ENCODE measurements at regions of chr2 and their contacts with region 1.

Region 1: DNA sequence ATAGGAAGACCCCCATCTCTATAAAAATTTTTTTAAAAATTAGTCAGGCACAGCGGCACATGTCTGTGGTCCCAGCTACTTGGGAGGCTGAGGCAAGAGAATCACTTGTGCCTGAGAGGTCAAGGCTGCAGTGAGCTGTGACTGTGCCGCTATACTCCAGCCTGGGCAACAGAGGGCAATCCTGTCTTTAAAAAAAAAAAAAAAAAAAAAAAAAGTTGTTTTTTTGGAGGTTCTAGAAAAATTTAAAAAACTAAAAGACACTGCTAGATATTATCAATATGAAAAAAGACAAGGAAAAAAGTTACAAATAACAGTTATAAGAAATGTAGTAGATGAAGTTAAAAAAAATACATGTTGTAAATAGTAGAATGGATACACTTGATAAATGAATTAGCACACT is 56.1 kb upstream of the C2orf15 start:
- DNase-seq: no peak
- ATAC-seq: peak; percentile 72
- H3K4me3 ChIP-seq: no peak overlapping the region
- H3K27ac ChIP-seq: no peak overlapping the region
- H3K4me1 ChIP-seq: no peaks in the 10 kb centered on the region
- H3K27me3 ChIP-seq: no peaks in the 10 kb centered on the region
- CTCF ChIP-seq: peak; percentile 25 to 49 (median 46); a peak in 5 of 6 replicates
- POLR2A ChIP-seq: no peak
- RAD21 ChIP-seq: peak; percentile 52

Region 2: GRCh38 chr2:99180755-99181623 is 95.6 kb after region 1 on chr2 and contains the starts of genes MITD1 and MRPL30:
- CTCF ChIA-PET with region 1: no interaction called
- POLR2A ChIA-PET with region 1: no interaction called
- RAD21 ChIA-PET with region 1: no interaction called
- intact Hi-C with region 1: loop called (anchors 5 kb)
- DNase-seq: peak; percentile 92
- ATAC-seq: peak; percentile 88
- H3K4me3 ChIP-seq: peak within 1 kb of the TSS; percentile 72 to 78
- H3K27ac ChIP-seq: peak within 1 kb of the TSS; percentile 67
- H3K4me1 ChIP-seq: peaks cover 9 to 21% of the 10 kb centered on the region in 2 experiments; a peak in 3 of 4 replicates
- H3K27me3 ChIP-seq: no peaks in the 10 kb centered on the region
- CTCF ChIP-seq: no peak
- POLR2A ChIP-seq: peak; percentile 82
- RAD21 ChIP-seq: no peak
- total RNA-seq, gene MITD1: 20.7 TPM
- total RNA-seq, gene MRPL30: 38.1 TPM